CD4-positive, alpha-beta T cell (primary cell): ENCODE measurements at regions of chr20 and their contacts with region 1.

Region 1: DNA sequence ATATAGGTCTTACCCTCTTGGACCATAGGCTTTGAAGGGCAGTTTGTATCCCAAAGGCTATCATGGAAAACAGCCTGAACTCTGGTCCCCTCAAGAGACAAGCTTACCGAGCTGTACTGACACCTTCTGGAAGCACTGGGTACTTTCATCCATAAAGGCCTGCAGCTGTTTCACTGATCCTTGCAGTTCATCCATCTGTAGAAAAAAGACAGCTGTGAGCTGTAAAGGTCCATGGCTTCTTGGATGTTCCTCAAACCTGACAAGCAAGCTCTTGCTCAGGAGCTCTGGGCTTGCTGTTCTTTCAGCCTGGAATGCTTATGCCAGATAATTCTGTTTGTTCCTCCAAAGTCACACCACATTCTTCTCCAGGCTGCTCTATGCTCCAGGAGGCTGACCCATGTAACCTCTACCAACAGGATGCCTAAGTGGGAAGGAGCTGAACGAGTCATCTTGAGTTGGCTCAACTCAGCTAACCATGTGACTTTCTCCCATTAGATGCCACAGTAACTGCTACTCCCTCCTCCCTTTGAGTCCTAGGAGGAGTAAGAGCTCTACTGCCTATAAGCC is 8.8 kb upstream of the NDRG3 start:
- DNase-seq: peak in 13 of 14 experiments; percentile 7 to 75 (median 22)
- ATAC-seq: peak; percentile 94
- H3K4me3 ChIP-seq: no peak overlapping the region
- H3K4me3 Mint-ChIP-seq: no peak overlapping the region
- H3K27ac ChIP-seq: no peak overlapping the region
- H3K27ac Mint-ChIP-seq: no peak overlapping the region
- H3K4me1 ChIP-seq: no peaks in the 10 kb centered on the region
- H3K4me1 Mint-ChIP-seq: no peaks in the 10 kb centered on the region
- H3K27me3 ChIP-seq: no peaks in the 10 kb centered on the region
- H3K27me3 Mint-ChIP-seq: no peaks in the 10 kb centered on the region
- CTCF ChIP-seq: peak; percentile 74

Region 2: GRCh38 chr20:36214684-36215256 is 540.0 kb before region 1 on chr20:
- CTCF ChIA-PET with region 1: no interaction called
- POLR2A ChIA-PET with region 1: no interaction called
- intact Hi-C with region 1: loop called in 1 of 2 experiments (anchors 1 kb)
- DNase-seq: peak in 4 of 14 experiments; percentile 12 to 38 (median 26)
- ATAC-seq: no peak
- H3K4me3 ChIP-seq: no peak overlapping the region
- H3K4me3 Mint-ChIP-seq: no peak overlapping the region
- H3K27ac ChIP-seq: no peak overlapping the region
- H3K27ac Mint-ChIP-seq: no peak overlapping the region
- H3K4me1 ChIP-seq: no peaks in the 10 kb centered on the region
- H3K4me1 Mint-ChIP-seq: no peaks in the 10 kb centered on the region
- H3K27me3 ChIP-seq: no peaks in the 10 kb centered on the region
- H3K27me3 Mint-ChIP-seq: no peaks in the 10 kb centered on the region
- CTCF ChIP-seq: peak; percentile 38

Region 3: GRCh38 chr20:36550797-36551299 is 203.9 kb before region 1 on chr20:
- CTCF ChIA-PET with region 1: no interaction called
- POLR2A ChIA-PET with region 1: no interaction called
- intact Hi-C with region 1: loop called (anchors 1 to 2 kb)
- DNase-seq: no peak
- ATAC-seq: no peak
- H3K4me3 ChIP-seq: no peak overlapping the region
- H3K4me3 Mint-ChIP-seq: no peak overlapping the region
- H3K27ac ChIP-seq: no peak overlapping the region
- H3K27ac Mint-ChIP-seq: no peak overlapping the region
- H3K4me1 ChIP-seq: no peaks in the 10 kb centered on the region
- H3K4me1 Mint-ChIP-seq: no peaks in the 10 kb centered on the region
- H3K27me3 ChIP-seq: no peaks in the 10 kb centered on the region
- H3K27me3 Mint-ChIP-seq: no peaks in the 10 kb centered on the region
- CTCF ChIP-seq: no peak

Region 4: DNA sequence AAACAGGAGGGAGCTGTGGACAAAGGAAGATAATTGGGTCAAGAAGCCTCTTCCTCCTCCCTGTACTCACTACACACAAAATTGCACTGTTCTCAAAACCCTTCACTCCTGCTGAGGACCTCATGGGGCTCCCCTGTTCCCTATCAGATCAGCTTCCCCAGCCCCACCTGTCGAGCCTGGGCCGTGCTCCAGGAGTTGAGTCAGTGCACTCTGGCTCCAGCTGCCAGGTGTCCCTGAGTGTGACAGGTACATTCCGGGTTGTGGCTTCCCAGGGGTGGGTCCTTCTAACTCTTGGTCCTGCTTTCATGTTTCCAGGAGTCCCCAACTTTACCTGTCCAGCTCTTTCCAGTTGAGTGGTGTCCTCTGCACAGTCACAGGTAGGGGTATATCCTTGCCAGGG is 140.8 kb before region 1 on chr20:
- CTCF ChIA-PET with region 1: interaction called, 4 read pairs
- POLR2A ChIA-PET with region 1: interaction called, 5 read pairs
- intact Hi-C with region 1: loop called (anchors 1 to 2 kb)
- DNase-seq: no peak
- ATAC-seq: no peak
- H3K4me3 ChIP-seq: no peak overlapping the region
- H3K4me3 Mint-ChIP-seq: no peak overlapping the region
- H3K27ac ChIP-seq: peak overlapping the region in 1 of 2 donors; percentile 29
- H3K27ac Mint-ChIP-seq: peak overlapping the region; percentile 22
- H3K4me1 ChIP-seq: peaks cover 13% of the 10 kb centered on the region
- H3K4me1 Mint-ChIP-seq: peaks cover 12% of the 10 kb centered on the region
- H3K27me3 ChIP-seq: no peaks in the 10 kb centered on the region
- H3K27me3 Mint-ChIP-seq: no peaks in the 10 kb centered on the region
- CTCF ChIP-seq: no peak

Region 5: DNA sequence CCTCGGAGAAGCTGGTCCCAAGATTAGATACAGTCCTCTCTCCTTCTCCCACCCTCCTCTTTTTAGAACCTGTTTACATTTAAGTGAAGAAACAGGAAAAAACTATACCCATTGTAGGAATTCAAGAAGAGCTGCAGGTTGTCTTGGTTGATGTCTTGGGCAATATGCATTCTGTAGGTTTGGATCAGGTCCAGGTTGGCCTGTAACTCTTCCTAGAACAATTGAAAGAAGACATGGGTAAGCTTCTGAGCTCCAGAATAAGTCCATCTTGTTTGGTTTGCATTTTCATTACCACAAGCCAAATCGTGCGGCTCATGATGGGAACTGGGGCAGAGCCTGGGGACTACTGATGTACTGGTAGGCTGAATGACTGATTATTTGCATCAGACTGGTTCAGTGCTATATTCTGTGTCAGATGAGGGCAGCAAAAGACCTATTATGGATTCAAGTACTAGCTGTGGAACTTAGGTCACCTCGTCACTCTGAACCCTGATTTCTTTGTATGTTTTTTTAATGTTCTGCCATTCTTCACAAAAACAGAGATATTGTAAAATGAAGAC is 88.5 kb before region 1 on chr20:
- CTCF ChIA-PET with region 1: interaction called, 5 read pairs
- POLR2A ChIA-PET with region 1: interaction called, 3 read pairs
- intact Hi-C with region 1: loop called in 1 of 2 experiments (anchors 10 kb)
- DNase-seq: peak in 3 of 14 experiments; percentile 30 to 42 (median 35)
- ATAC-seq: no peak
- H3K4me3 ChIP-seq: no peak overlapping the region
- H3K4me3 Mint-ChIP-seq: no peak overlapping the region
- H3K27ac ChIP-seq: no peak overlapping the region
- H3K27ac Mint-ChIP-seq: no peak overlapping the region
- H3K4me1 ChIP-seq: no peaks in the 10 kb centered on the region
- H3K4me1 Mint-ChIP-seq: no peaks in the 10 kb centered on the region
- H3K27me3 ChIP-seq: no peaks in the 10 kb centered on the region
- H3K27me3 Mint-ChIP-seq: no peaks in the 10 kb centered on the region
- CTCF ChIP-seq: no peak

Region 6: GRCh38 chr20:36717657-36718056 is 37.1 kb before region 1 on chr20:
- CTCF ChIA-PET with region 1: interaction called, 8 read pairs
- POLR2A ChIA-PET with region 1: no interaction called
- intact Hi-C with region 1: loop called (anchors 1 to 5 kb)
- DNase-seq: peak in 4 of 14 experiments; percentile 35 to 55 (median 40)
- ATAC-seq: peak; percentile 54
- H3K4me3 ChIP-seq: no peak overlapping the region
- H3K4me3 Mint-ChIP-seq: no peak overlapping the region
- H3K27ac ChIP-seq: no peak overlapping the region
- H3K27ac Mint-ChIP-seq: no peak overlapping the region
- H3K4me1 ChIP-seq: no peaks in the 10 kb centered on the region
- H3K4me1 Mint-ChIP-seq: no peaks in the 10 kb centered on the region
- H3K27me3 ChIP-seq: no peaks in the 10 kb centered on the region
- H3K27me3 Mint-ChIP-seq: no peaks in the 10 kb centered on the region
- CTCF ChIP-seq: peak; percentile 50